ENCODE measurements at regions of chr6 and their contacts with region 1.

Region 1: GRCh38 chr6:31079656-31080261 is 32.6 kb downstream of the C6orf15 start:
- DNase-seq: peak; percentile 73 to 86
- H3K4me3 ChIP-seq: peak overlapping the region in 1 of 4 donors; percentile 9
- H3K27ac ChIP-seq: no peak overlapping the region
- H3K4me1 ChIP-seq: peaks cover 0 to 10% (median 9%) of the 10 kb centered on the region in 4 donors
- H3K27me3 ChIP-seq: no peaks in the 10 kb centered on the region
- CTCF ChIP-seq: peak in 5 of 7 experiments; percentile 41 to 71 (median 66)
- EP300 ChIP-seq: no peak
- POLR2A ChIP-seq: no peak

Region 2: DNA sequence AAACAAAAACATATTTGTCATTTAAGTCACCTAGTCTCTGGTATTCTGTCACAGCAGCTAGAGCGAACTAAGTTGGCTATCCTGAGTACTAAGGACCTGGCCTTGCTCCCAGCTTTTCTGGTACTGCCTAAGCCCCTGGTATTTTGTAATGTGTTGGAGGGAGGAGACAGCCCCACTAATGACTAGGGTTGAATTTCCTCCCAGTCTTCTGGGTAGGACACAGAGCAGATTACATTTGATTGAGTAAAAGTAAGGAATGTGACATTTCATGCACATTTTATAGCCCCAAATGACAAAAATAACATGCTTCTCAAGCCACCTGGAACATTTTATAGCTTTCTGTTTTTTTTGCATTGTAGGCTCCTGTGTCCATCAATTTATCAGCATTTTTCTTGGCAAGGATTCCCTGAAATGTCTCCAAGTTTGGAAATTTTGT is 243.3 kb before region 1 on chr6:
- intact Hi-C with region 1: loop called (anchors 10 kb)
- DNase-seq: peak in 1 of 2 donors; percentile 58
- H3K4me3 ChIP-seq: no peak overlapping the region
- H3K27ac ChIP-seq: peak overlapping the region in 1 of 5 donors; percentile 25
- H3K4me1 ChIP-seq: peaks cover 15 to 42% (median 32%) of the 10 kb centered on the region in 4 donors
- H3K27me3 ChIP-seq: no peaks in the 10 kb centered on the region
- CTCF ChIP-seq: no peak
- EP300 ChIP-seq: no peak
- POLR2A ChIP-seq: no peak

Region 3: DNA sequence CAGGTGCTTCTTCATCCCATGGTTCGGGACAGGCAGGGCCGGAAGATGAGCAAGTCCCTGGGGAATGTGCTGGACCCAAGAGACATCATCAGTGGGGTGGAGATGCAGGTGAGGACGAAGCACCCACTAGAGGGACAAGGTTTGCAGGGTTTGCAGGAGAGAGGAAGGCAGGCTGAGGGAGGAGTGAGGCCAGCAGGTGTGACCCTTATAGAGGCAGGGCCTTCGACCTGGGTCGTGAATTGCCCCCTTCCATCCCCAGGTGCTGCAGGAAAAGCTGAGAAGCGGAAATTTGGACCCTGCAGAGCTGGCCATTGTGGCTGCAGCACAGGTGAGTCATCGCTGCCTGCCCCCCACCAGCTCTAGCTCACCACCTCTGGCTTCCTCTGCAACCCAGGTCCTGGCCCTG is 157.3 kb before region 1 on chr6:
- intact Hi-C with region 1: loop called (anchors 5 kb)
- DNase-seq: no peak
- H3K4me3 ChIP-seq: no peak overlapping the region
- H3K27ac ChIP-seq: no peak overlapping the region
- H3K4me1 ChIP-seq: peaks cover 0 to 12% (median 0%) of the 10 kb centered on the region in 4 donors
- H3K27me3 ChIP-seq: no peaks in the 10 kb centered on the region
- CTCF ChIP-seq: no peak
- EP300 ChIP-seq: no peak
- POLR2A ChIP-seq: no peak

Region 4: DNA sequence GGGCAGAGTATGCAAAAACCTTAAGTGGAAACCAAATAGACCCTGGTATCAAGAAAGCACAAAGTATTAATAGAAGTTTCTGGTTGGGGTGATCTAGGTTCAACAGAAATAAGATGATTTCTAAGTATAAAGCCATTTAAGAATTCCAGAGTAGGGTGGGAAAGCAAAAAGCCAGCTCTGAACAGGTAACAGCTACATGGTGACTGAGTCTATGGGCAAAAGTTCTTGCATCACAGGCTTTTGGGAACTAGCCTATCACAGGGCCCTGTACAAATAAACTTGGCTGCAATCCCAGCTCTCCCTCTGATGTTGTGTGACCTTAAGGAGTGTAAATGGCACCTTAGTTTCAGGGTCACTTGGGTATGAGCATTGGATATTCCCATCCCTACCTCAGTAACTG is 84.2 kb after region 1 on chr6:
- intact Hi-C with region 1: no loop called
- DNase-seq: peak; percentile 65 to 69
- H3K4me3 ChIP-seq: no peak overlapping the region
- H3K27ac ChIP-seq: peak overlapping the region in 1 of 5 donors; percentile 8
- H3K4me1 ChIP-seq: peaks cover 8 to 26% (median 12%) of the 10 kb centered on the region in 4 donors
- H3K27me3 ChIP-seq: no peaks in the 10 kb centered on the region
- CTCF ChIP-seq: no peak
- EP300 ChIP-seq: no peak
- POLR2A ChIP-seq: no peak

Region 5: DNA sequence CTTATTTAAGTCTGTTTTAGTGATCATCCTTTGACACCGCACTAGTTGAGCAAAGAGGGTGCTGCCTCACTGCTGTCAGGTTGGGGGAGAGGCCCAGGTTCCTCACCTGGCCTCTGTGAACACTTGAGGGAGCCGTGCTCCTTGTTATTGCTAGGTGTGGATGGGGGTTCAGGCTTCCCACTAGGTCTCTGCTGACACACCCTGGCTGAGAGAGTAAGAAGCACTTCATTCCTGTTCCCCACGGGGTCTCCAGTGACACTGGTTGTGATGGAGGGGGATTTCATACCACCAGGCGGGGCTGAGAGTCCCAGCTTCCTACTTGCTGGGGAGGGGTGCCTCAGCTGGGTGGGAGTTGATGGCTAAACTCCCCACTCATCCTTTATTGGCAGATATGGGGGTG is 1155.2 kb after region 1 on chr6:
- intact Hi-C with region 1: no loop called
- DNase-seq: no peak
- H3K4me3 ChIP-seq: no peak overlapping the region
- H3K27ac ChIP-seq: no peak overlapping the region
- H3K4me1 ChIP-seq: no peaks in the 10 kb centered on the region
- H3K27me3 ChIP-seq: no peaks in the 10 kb centered on the region
- CTCF ChIP-seq: no peak
- EP300 ChIP-seq: no peak
- POLR2A ChIP-seq: no peak

Measured in stomach (tissue), 19 donors.